Activated CD4-positive, alpha-beta T cell treated with anti-CD3 and anti-CD28 coated beads for 36 hours (primary cell): ENCODE measurements at regions of chr11 and their contacts with region 1.

Region 1: GRCh38 chr11:130434521-130435223 is 6.3 kb upstream of the ADAMTS8 start:
- DNase-seq: peak; percentile 82
- ATAC-seq: peak; percentile 83
- H3K4me3 Mint-ChIP-seq: no peak overlapping the region
- H3K27ac Mint-ChIP-seq: no peak overlapping the region
- H3K4me1 Mint-ChIP-seq: peaks cover 10% of the 10 kb centered on the region
- H3K27me3 Mint-ChIP-seq: peaks cover 11% of the 10 kb centered on the region

Region 2: DNA sequence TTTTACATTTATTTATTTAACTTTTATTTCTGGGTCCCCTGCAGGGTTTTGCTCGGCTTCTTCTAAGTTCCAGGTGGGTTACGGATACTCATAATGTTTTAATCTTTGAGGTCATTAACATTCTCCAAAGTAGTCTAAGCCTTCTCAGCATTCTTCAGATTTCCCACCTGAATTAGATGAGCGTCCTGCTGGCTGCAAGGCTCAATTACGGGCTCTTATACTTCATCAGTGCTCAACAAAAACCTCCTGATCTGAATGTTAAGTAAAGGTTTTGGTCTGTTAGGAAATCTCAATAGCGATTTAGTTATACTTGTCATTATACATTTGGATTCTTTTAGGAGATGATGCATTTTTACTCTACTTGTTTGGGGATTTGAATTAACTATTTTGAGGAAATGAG is 512.0 kb before region 1 on chr11:
- CTCF ChIA-PET with region 1: no interaction called
- POLR2A ChIA-PET with region 1: no interaction called
- intact Hi-C with region 1: no loop called
- DNase-seq: no peak
- ATAC-seq: no peak
- H3K4me3 Mint-ChIP-seq: no peak overlapping the region
- H3K27ac Mint-ChIP-seq: no peak overlapping the region
- H3K4me1 Mint-ChIP-seq: peaks cover 6% of the 10 kb centered on the region
- H3K27me3 Mint-ChIP-seq: no peaks in the 10 kb centered on the region

Region 3: GRCh38 chr11:130070109-130070845 is 364.4 kb before region 1 on chr11:
- CTCF ChIA-PET with region 1: no interaction called
- POLR2A ChIA-PET with region 1: no interaction called
- intact Hi-C with region 1: no loop called
- DNase-seq: peak; percentile 71
- ATAC-seq: peak; percentile 30
- H3K4me3 Mint-ChIP-seq: peak overlapping the region; percentile 84
- H3K27ac Mint-ChIP-seq: no peak overlapping the region
- H3K4me1 Mint-ChIP-seq: peaks cover 22% of the 10 kb centered on the region
- H3K27me3 Mint-ChIP-seq: peaks cover 6% of the 10 kb centered on the region

Region 4: GRCh38 chr11:130213143-130213978 is 221.3 kb before region 1 on chr11:
- CTCF ChIA-PET with region 1: interaction called, 5 read pairs
- POLR2A ChIA-PET with region 1: interaction called, 3 read pairs
- intact Hi-C with region 1: loop called (anchors 1 to 2 kb)
- DNase-seq: peak; percentile 83
- ATAC-seq: peak; percentile 88
- H3K4me3 Mint-ChIP-seq: no peak overlapping the region
- H3K27ac Mint-ChIP-seq: no peak overlapping the region
- H3K4me1 Mint-ChIP-seq: no peaks in the 10 kb centered on the region
- H3K27me3 Mint-ChIP-seq: peaks cover 2% of the 10 kb centered on the region

Region 5: DNA sequence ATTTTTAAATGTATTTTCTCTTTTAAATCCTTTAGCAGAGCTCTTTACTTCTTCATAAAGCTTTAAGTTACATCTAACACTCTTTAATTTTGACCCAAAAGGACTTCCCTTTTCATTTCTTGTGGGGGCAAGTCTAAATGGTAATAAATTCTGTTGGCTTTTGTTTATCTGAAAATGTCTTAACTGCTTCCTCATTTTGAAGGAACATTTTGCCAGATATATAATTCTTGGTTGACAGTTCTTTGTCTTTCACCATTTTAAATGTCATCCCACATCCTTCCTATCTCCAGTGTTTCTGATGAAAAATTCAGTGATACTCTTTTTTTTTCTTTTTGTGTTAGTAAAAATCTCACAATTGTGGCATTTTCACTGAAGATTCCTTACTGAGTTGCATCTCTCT is 75.3 kb before region 1 on chr11:
- CTCF ChIA-PET with region 1: no interaction called
- POLR2A ChIA-PET with region 1: no interaction called
- intact Hi-C with region 1: no loop called
- DNase-seq: no peak
- ATAC-seq: no peak
- H3K4me3 Mint-ChIP-seq: no peak overlapping the region
- H3K27ac Mint-ChIP-seq: no peak overlapping the region
- H3K4me1 Mint-ChIP-seq: no peaks in the 10 kb centered on the region
- H3K27me3 Mint-ChIP-seq: no peaks in the 10 kb centered on the region

Region 6: GRCh38 chr11:130636722-130637517 is 202.2 kb after region 1 on chr11:
- CTCF ChIA-PET with region 1: no interaction called
- POLR2A ChIA-PET with region 1: no interaction called
- intact Hi-C with region 1: loop called in 1 of 2 experiments (anchors 10 kb)
- DNase-seq: no peak
- ATAC-seq: peak; percentile 69
- H3K4me3 Mint-ChIP-seq: no peak overlapping the region
- H3K27ac Mint-ChIP-seq: no peak overlapping the region
- H3K4me1 Mint-ChIP-seq: peaks cover 4% of the 10 kb centered on the region
- H3K27me3 Mint-ChIP-seq: peaks cover 20% of the 10 kb centered on the region

Region 7: DNA sequence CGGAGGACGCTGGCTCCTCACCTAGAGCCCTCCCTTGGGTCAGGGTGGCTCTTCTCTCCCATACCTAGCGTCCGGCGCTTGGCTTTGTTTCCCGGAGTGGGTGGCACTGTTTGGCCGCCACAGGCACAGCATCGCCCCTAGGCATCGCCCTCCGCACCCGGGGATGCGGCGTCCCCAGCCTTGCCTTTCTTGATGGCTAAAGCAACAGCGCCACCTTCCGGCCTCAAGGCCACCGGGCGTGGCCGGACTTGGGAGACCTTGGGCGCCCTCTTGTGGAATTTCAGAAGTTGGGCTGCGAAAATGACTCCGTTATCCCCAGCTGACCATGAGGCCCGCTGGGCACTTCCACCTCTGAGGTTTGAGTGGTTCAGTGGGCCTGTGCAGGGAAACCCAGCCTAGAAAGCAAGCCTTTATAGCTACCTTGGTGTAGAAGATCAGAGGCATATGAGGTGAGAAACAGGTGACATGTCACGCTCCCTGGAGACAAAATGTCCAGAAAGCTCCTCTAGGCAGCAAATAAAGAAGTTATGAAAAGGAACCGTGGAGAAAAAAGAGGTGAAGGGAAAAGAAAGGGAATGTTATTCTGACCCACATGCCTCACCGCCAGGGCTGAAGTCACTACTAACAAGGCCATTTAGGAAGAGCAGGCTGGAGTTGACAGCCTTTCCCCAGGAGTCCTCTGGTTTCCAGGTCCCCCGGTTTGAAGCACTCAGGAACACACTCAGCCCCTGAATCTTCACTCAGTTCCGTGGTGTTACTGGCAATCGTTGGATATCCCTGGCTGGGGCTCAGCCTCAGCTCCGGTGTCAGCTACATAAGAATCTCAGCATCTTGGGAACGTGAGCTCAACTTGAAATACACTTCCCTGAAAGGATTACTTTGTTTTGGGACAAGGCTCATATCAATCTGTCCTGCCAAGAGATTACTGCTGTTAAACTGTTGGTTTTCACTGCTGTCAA is 427.5 kb after region 1 on chr11:
- CTCF ChIA-PET with region 1: interaction called, 256 read pairs
- POLR2A ChIA-PET with region 1: no interaction called
- intact Hi-C with region 1: loop called (anchors 1 kb)
- DNase-seq: peak; percentile 93
- ATAC-seq: peak; percentile 94
- H3K4me3 Mint-ChIP-seq: no peak overlapping the region
- H3K27ac Mint-ChIP-seq: no peak overlapping the region
- H3K4me1 Mint-ChIP-seq: no peaks in the 10 kb centered on the region
- H3K27me3 Mint-ChIP-seq: peaks cover under 1% of the 10 kb centered on the region

Region 8: DNA sequence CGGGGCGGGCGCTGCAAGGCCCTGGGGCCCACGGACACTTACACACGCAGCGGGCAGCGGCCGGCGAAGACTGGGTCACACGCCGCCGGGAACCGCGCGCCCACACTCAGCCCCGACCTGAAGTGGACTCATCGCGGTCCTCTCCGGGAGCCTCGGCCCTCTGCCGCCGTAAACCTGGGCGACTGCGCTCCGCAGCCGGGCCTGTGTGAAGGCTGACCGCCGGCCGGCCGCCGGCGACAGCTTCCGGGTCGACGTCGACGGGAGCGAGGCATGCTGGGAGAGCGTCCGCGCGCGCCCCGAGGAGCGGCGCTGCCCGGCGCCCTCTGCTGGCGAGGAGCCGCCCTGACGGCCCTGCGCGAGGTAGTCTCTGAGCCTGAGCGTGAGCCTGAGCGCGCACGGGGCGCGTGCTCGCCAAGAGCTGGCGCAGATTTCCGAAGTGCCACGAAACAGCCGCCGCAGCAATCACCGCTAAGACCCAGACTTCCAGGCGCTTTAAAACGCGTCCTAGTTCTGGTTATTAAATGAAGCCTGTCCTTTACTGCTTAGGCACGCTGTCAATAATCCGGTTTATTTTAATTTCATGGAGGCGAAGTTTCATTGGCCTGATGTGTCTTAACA is 481.7 kb after region 1 on chr11 and contains the start of gene SNX19:
- CTCF ChIA-PET with region 1: interaction called, 3 read pairs
- POLR2A ChIA-PET with region 1: no interaction called
- intact Hi-C with region 1: loop called in 1 of 2 experiments (anchors 1 kb)
- DNase-seq: peak; percentile 94
- ATAC-seq: peak; percentile 100
- H3K4me3 Mint-ChIP-seq: peak within 1 kb of the TSS; percentile 78
- H3K27ac Mint-ChIP-seq: peak within 1 kb of the TSS; percentile 84
- H3K4me1 Mint-ChIP-seq: peaks cover 32% of the 10 kb centered on the region
- H3K27me3 Mint-ChIP-seq: peaks cover 4% of the 10 kb centered on the region
- total RNA-seq, gene SNX19: 22.7 to 29.5 TPM